ENCODE measurements at regions of chr10 and their contacts with region 1.

Region 1: GRCh38 chr10:113711142-113711541 is 31.4 kb downstream of the CASP7 start:
- DNase-seq: no peak
- H3K4me3 ChIP-seq: no peak overlapping the region
- H3K27ac ChIP-seq: peak overlapping the region in 3 of 5 donors; percentile 8 to 62 (median 39)
- H3K4me1 ChIP-seq: peaks cover 30 to 78% (median 55%) of the 10 kb centered on the region in 4 donors
- H3K27me3 ChIP-seq: no peaks in the 10 kb centered on the region
- CTCF ChIP-seq: no peak
- EP300 ChIP-seq: no peak
- POLR2A ChIP-seq: no peak

Region 2: GRCh38 chr10:113609704-113610108 is 101.4 kb before region 1 on chr10:
- intact Hi-C with region 1: no loop called
- DNase-seq: no peak
- H3K4me3 ChIP-seq: no peak overlapping the region
- H3K27ac ChIP-seq: no peak overlapping the region
- H3K4me1 ChIP-seq: peaks cover 0 to 14% (median 6%) of the 10 kb centered on the region in 4 donors
- H3K27me3 ChIP-seq: peaks cover 0 to 6% (median 0%) of the 10 kb centered on the region in 3 donors
- CTCF ChIP-seq: no peak
- EP300 ChIP-seq: no peak
- POLR2A ChIP-seq: no peak

Region 3: GRCh38 chr10:114095559-114096337 is 384.6 kb after region 1 on chr10:
- intact Hi-C with region 1: loop called (anchors 10 kb)
- DNase-seq: no peak
- H3K4me3 ChIP-seq: no peak overlapping the region
- H3K27ac ChIP-seq: no peak overlapping the region
- H3K4me1 ChIP-seq: peaks cover 6 to 16% (median 7%) of the 10 kb centered on the region in 4 donors
- H3K27me3 ChIP-seq: peaks cover 0 to under 1% (median 0%) of the 10 kb centered on the region in 3 donors
- CTCF ChIP-seq: no peak
- EP300 ChIP-seq: no peak
- POLR2A ChIP-seq: no peak

Measured in stomach (tissue), 19 donors.